ENCODE measurements at regions of chr6 and their contacts with region 1.

Region 1: GRCh38 chr6:39892490-39893129 is 41.7 kb downstream of the MOCS1 start:
- DNase-seq: peak in 1 of 2 donors; percentile 27
- H3K4me3 ChIP-seq: no peak overlapping the region
- H3K27ac ChIP-seq: peak overlapping the region in 1 of 2 donors; percentile 52
- H3K4me1 ChIP-seq: no peaks in the 10 kb centered on the region
- H3K27me3 ChIP-seq: no peaks in the 10 kb centered on the region
- CTCF ChIP-seq: peak in 2 of 3 donors; percentile 33 to 59
- POLR2A ChIP-seq: no peak

Region 2: GRCh38 chr6:39361657-39362486 is 530.7 kb before region 1 on chr6:
- intact Hi-C with region 1: loop called (anchors 10 kb)
- DNase-seq: peak in 1 of 2 donors; percentile 41
- H3K4me3 ChIP-seq: peak overlapping the region in 1 of 3 donors; percentile 34
- H3K27ac ChIP-seq: no peak overlapping the region
- H3K4me1 ChIP-seq: no peaks in the 10 kb centered on the region
- H3K27me3 ChIP-seq: no peaks in the 10 kb centered on the region
- CTCF ChIP-seq: peak; percentile 63 to 68 (median 66)
- POLR2A ChIP-seq: no peak

Region 3: DNA sequence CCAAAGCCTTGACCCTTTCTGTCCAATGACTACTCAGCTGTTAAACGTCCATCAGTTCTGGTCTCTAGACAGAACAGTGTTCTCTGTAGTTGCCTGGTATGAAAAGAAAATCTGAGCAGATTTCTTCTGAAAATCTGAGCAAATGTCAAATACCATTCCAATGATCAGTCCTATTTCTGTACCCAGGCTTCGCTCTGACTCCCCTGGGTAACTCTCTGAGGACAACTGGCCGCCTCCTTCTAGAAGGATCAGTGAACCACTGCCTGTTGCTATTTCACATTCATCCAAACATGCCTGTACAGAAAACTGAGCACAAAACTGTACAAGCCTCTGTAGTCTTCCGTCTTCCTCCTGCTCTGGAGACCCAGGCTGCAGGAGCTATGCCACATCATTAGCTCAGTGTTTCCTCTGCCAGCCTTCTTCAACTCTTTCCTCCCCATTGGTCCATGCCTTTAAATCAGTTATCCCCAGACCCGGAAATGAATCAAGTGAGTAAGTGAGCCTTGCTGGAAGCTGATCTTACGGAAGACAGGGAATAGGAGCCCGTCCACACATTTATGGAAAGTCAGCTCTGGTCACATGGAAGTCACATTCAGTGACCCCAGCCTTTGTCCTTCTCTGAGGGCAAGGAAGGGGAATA is 37.1 kb before region 1 on chr6:
- intact Hi-C with region 1: no loop called
- DNase-seq: no peak
- H3K4me3 ChIP-seq: no peak overlapping the region
- H3K27ac ChIP-seq: peak overlapping the region in 1 of 2 donors; percentile 73
- H3K4me1 ChIP-seq: no peaks in the 10 kb centered on the region
- H3K27me3 ChIP-seq: no peaks in the 10 kb centered on the region
- CTCF ChIP-seq: no peak
- POLR2A ChIP-seq: no peak

Region 4: DNA sequence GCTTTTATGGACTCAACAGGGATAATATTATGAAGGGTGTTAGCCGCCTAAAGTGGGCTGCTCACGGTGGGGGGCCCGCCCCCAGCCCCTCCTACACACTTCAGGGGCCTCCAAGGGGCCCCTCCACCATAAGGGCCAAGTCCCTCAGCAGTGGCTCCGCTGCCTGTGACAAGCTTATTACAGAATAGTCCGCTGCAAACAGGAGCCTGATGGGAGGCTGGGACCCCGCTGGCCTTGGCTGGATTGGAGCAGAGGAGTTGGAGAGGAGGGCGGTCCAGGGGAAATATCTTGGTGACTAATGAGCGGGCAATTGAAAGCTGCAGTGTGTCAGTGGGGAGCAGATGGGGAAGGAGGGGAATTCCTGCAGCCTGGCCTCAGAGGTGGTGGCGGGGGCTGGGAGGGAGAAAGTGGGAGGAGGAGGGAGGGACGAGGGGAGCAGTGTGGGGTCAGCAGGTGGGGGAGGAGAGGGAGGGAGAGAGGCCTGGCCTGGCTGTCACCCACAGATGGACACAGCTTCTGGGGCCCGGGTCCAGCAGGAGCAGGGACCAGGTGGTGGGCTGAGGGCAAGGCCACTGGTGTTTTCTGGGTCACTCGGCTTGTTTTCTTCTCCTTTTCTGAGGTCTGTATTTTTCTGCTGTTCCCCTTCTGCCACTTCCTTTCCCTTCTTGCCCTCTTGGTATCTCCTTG is 1596.0 kb after region 1 on chr6:
- intact Hi-C with region 1: no loop called
- DNase-seq: no peak
- H3K4me3 ChIP-seq: no peak overlapping the region
- H3K27ac ChIP-seq: no peak overlapping the region
- H3K4me1 ChIP-seq: no peaks in the 10 kb centered on the region
- H3K27me3 ChIP-seq: no peaks in the 10 kb centered on the region
- CTCF ChIP-seq: no peak
- POLR2A ChIP-seq: no peak